Ascending aorta (tissue), 2 donors: ENCODE measurements at regions of chr2 and their contacts with region 1.

Region 1: DNA sequence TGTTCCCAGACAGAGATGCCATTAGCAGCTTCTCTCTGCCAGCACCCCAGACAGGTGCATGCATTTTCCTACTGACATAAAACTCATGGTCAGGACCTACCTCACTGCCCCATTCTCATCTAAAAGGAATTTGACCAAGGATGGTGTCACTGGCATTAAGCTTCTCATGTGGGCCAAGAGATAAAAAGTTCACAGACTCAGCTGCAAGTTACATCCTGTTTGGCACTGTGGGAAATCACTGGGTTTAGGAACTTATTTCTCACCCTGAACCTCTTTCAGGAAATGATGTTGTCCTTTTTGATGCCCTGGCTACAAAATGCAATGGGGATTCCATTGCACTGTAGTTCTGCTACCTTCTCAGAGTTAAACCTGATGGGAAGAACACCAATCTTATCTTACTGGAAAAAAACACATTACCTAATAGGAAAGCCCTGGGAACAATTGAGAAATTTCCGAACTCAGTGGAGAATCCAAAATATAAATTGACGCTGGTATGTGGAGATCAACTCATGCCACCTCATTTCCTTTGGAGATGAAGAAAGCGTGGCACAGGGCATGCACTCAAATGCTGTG is 252.1 kb upstream of the COPS8 start:
- DNase-seq: no peak
- H3K4me3 ChIP-seq: no peak overlapping the region
- H3K27ac ChIP-seq: no peak overlapping the region
- H3K4me1 ChIP-seq: peaks cover 3 to 15% of the 10 kb centered on the region in 2 donors
- H3K27me3 ChIP-seq: no peaks in the 10 kb centered on the region
- CTCF ChIP-seq: no peak

Region 2: DNA sequence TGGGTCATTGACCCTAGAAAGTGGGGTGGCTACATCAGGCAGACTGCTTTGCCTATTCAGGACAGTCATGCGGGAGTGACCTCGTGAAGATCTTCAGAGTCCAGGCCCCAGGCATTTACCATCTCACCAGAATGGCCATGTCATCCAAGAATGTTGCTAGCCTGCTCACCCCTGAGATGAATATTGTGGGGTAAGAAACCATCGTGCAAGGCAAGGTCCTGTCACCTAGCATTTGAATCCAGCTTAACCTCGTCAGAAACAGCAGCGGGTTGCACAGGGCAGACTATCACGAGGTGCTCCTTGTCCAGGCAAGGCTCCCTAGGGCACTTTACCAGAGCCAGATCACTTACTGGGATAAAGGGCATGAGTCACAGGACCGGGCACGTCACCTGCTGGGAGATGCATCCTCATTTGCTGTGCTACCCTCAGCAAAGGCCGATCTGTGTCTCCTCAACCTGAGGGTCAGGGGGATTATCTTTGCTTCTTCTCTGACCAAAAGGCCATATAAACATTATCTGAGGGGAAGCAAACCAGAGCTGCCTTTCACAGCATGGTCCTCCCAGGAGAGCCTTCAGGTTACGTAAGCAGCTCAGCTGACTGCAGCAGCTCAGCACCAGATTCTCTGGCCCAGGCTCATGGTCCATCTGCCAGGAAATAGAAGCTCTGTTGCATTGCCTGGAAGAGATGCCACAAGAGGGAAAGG is 101.6 kb before region 1 on chr2:
- intact Hi-C with region 1: loop called (anchors 5 kb)
- DNase-seq: peak; percentile 46 to 88
- H3K4me3 ChIP-seq: no peak overlapping the region
- H3K27ac ChIP-seq: peak overlapping the region; percentile 42 to 61
- H3K4me1 ChIP-seq: peaks cover 0 to 10% of the 10 kb centered on the region in 2 donors
- H3K27me3 ChIP-seq: no peaks in the 10 kb centered on the region
- CTCF ChIP-seq: no peak

Region 3: GRCh38 chr2:236782938-236783337 is 50.6 kb before region 1 on chr2:
- intact Hi-C with region 1: loop called (anchors 5 kb)
- DNase-seq: no peak
- H3K4me3 ChIP-seq: no peak overlapping the region
- H3K27ac ChIP-seq: no peak overlapping the region
- H3K4me1 ChIP-seq: peaks cover 0 to 15% of the 10 kb centered on the region in 2 donors
- H3K27me3 ChIP-seq: no peaks in the 10 kb centered on the region
- CTCF ChIP-seq: no peak

Region 4: DNA sequence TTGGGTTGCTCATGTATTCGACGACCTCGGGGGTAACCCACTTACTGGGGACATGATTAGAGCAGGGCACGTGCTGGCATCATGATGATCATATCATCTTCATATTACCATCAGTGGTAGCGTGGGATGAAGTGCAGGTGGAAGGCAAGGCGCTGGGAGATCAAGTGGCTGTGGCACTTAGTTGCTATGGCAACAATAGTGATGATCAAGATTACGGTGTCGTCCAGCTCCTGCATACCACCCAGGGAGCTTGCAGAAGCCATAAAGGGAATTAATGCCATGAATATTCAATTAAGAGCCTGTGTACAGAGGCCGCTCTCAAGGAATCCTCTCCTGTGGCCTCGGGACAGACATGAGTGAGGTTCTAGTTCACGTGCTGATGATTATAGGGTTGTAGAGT is 14.9 kb after region 1 on chr2:
- intact Hi-C with region 1: no loop called
- DNase-seq: no peak
- H3K4me3 ChIP-seq: no peak overlapping the region
- H3K27ac ChIP-seq: no peak overlapping the region
- H3K4me1 ChIP-seq: no peaks in the 10 kb centered on the region
- H3K27me3 ChIP-seq: no peaks in the 10 kb centered on the region
- CTCF ChIP-seq: no peak

Region 5: GRCh38 chr2:237045432-237045831 is 211.8 kb after region 1 on chr2:
- intact Hi-C with region 1: no loop called
- DNase-seq: no peak
- H3K4me3 ChIP-seq: no peak overlapping the region
- H3K27ac ChIP-seq: no peak overlapping the region
- H3K4me1 ChIP-seq: no peaks in the 10 kb centered on the region
- H3K27me3 ChIP-seq: no peaks in the 10 kb centered on the region
- CTCF ChIP-seq: no peak